GM10248 (cell line): ENCODE measurements at regions of chr19 and their contacts with region 1.

Region 1: GRCh38 chr19:39765091-39766076 is 13.3 kb upstream of the LEUTX start:
- DNase-seq: no peak
- CTCF ChIP-seq: peak; percentile 38

Region 2: DNA sequence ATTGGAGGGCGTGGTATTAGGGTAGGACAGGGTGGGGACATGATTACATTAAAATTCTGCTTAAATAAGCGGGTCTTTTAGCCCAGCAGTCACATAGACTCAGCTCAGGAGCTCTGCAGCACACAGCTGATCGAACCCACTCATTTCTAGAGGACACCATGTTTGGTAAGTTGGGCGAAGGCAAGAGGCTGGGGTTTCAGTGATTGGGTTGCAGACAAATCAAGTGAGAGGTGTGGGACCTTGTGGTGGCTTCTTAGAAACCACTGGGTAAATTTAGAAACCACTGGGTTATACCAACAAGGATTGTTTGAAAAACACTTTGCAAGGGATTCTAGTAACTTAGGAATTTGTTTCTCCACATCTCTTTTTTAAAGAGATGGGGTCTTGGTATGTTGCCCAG is 13.4 kb after region 1 on chr19 and contains the start of gene LEUTX:
- CTCF ChIA-PET with region 1: interaction called, 19 read pairs
- POLR2A ChIA-PET with region 1: no interaction called
- DNase-seq: peak; percentile 21
- CTCF ChIP-seq: no peak

Region 3: DNA sequence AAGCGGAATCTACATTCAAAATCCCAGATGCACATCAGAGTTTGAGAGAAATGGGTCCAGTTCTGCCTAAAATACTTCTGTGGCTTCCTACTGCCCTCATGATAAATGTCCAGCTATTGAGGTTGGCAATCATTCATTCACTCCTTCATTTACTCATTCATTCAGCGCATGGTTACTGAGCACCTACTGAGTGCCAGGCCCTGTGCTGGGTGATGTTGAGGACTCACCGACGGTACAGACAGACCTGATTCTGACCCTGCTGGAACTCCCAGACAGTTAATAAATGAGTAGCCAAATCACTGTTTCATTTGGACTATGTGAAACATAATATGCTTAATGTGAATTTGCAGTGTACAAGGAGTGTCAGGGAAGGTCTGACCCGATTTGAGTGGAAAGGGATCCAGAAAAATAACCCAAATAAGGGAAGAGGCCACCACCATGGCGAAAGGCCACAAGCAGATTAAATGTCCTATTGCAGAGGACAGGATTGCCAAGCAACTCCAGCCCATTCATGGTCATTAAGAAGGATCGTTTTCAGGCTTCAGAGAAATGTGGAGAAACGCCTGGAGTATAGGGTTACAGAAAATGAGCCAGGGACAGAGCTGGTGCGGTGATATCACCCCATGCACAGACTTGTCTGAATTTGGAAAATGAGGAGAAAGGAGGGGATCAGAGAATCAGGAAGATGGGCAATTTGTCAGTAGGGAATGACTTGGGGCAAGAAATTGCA is 48.0 kb after region 1 on chr19:
- CTCF ChIA-PET with region 1: no interaction called
- POLR2A ChIA-PET with region 1: no interaction called
- DNase-seq: no peak
- CTCF ChIP-seq: no peak

Region 4: GRCh38 chr19:39889872-39890545 is 124.6 kb after region 1 on chr19:
- CTCF ChIA-PET with region 1: no interaction called
- POLR2A ChIA-PET with region 1: no interaction called
- DNase-seq: no peak
- CTCF ChIP-seq: no peak

Region 5: GRCh38 chr19:39915101-39915847 is 149.9 kb after region 1 on chr19:
- CTCF ChIA-PET with region 1: no interaction called
- POLR2A ChIA-PET with region 1: no interaction called
- DNase-seq: peak; percentile 11
- CTCF ChIP-seq: no peak